RWPE1 (cell line): ENCODE measurements at regions of chr6 and their contacts with region 1.

Region 1: GRCh38 chr6:74289884-74290283 is 593.9 kb downstream of the CD109 start:
- DNase-seq: no peak
- H3K27ac ChIP-seq: no peak overlapping the region
- CTCF ChIP-seq: no peak

Region 2: DNA sequence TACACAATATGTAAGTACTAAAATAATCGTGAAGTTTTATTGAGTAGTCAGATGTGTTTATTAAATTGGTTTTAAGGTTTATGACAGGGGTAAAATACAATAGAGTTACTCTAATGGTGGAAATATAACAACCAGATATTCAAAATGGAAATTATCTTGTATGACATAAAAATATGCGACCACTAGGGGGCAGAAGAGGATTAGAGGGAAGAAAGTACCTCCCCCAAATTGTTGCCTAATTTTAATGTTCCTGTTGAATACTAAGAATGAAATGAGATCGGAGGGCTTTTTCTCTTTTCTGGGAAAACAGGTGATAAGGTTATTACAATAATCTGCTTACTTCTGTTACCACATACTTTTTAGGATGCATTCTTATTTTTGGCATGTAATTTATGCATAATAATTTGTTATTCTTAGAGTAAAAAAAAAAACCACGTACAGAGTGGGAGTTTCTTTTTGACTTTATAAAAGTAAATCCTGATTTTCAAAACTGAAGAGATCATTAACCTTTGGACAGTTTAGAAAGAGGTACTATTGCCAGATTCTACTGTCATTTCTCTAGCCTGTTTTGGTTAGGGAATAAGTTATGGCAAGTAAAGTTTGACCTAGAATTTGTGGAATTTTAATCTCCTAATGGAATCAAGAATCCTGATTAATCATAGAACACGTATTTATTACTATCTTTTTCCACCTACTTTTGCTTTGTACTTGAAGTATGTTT is 434.7 kb before region 1 on chr6:
- CTCF ChIA-PET with region 1: no interaction called
- POLR2A ChIA-PET with region 1: no interaction called
- DNase-seq: peak; percentile 29
- H3K27ac ChIP-seq: no peak overlapping the region
- CTCF ChIP-seq: peak; percentile 81

Region 3: DNA sequence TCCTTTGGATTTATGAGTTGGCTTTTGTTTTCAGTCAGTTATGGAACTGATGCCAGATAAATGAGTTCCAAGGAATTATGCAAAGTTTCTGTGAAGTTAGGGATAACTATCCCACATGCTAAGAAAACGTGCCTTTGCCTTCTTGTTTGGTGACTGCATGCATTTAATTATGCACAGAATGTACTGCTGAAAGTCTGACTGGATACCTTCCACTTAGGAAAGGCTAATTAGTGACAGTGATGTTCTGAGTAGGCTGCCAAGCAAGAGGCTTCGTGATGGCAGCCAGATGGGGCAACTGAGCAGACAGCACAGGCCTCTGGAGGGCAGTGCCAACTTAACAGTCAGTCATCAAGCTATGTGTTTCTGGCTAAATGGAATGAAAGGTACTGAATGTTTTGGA is 304.0 kb before region 1 on chr6:
- CTCF ChIA-PET with region 1: interaction called, 14 read pairs
- POLR2A ChIA-PET with region 1: no interaction called
- DNase-seq: peak; percentile 5
- H3K27ac ChIP-seq: no peak overlapping the region
- CTCF ChIP-seq: no peak

Region 4: DNA sequence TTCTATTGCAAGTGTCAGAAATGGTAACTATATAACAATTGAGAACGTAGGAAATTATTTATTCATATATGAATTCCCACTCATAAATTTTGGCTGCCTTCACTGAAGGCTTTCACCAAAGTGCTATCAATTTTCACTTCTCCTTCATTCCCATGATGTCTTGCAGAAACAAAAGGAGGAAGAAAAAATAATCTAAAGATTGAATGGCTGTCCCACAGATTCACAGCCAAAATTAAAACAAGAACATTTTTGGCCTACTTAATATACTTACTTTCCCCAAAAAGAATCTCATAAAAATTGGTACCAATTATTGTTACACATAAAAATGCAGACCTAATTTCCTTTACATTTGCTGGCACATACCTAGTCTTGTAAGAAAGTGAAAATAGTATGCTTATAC is 22.2 kb after region 1 on chr6:
- CTCF ChIA-PET with region 1: no interaction called
- POLR2A ChIA-PET with region 1: no interaction called
- DNase-seq: no peak
- H3K27ac ChIP-seq: no peak overlapping the region
- CTCF ChIP-seq: no peak